Colonic mucosa (tissue), 4 donors: ENCODE measurements at regions of chr17 and their contacts with region 1.

Region 1: GRCh38 chr17:40559954-40560591 is 5.2 kb downstream of the CCR7 start:
- DNase-seq: peak; percentile 95
- H3K4me3 ChIP-seq: peak overlapping the region; percentile 20
- H3K27ac ChIP-seq: peak overlapping the region; percentile 51
- H3K4me1 ChIP-seq: peaks cover 9% of the 10 kb centered on the region
- H3K27me3 ChIP-seq: no peaks in the 10 kb centered on the region
- CTCF ChIP-seq: peak; percentile 97

Region 2: GRCh38 chr17:40399185-40399584 is 160.9 kb before region 1 on chr17:
- intact Hi-C with region 1: loop called (anchors 5 kb)
- DNase-seq: no peak
- H3K4me3 ChIP-seq: no peak overlapping the region
- H3K27ac ChIP-seq: no peak overlapping the region
- H3K4me1 ChIP-seq: no peaks in the 10 kb centered on the region
- H3K27me3 ChIP-seq: no peaks in the 10 kb centered on the region
- CTCF ChIP-seq: peak; percentile 64

Region 3: GRCh38 chr17:40510328-40510648 is 49.8 kb before region 1 on chr17:
- intact Hi-C with region 1: no loop called
- DNase-seq: no peak
- H3K4me3 ChIP-seq: no peak overlapping the region
- H3K27ac ChIP-seq: no peak overlapping the region
- H3K4me1 ChIP-seq: no peaks in the 10 kb centered on the region
- H3K27me3 ChIP-seq: no peaks in the 10 kb centered on the region
- CTCF ChIP-seq: no peak

Region 4: DNA sequence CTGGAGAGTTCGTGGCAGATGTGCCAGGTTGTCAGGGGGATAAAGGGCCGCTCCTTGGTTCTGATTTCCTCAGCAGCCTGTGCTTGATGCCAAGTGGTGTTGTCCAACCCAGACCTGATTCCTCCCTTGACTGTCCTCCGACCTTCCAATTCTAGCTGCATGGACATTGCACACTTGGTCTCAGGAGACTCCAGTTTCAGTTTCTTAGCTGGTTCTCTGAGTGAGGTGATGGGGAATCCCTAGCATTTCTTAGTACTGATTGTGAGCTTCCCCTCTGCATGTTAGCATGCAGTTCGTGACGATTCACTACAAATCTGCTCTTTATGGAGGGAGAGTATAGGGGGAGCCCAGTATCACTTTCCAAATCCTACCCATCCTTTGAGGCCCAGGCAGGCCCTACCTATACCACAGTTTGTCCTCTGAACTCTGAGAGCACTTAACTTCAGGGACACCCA is 17.6 kb after region 1 on chr17:
- intact Hi-C with region 1: no loop called
- DNase-seq: no peak
- H3K4me3 ChIP-seq: no peak overlapping the region
- H3K27ac ChIP-seq: no peak overlapping the region
- H3K4me1 ChIP-seq: no peaks in the 10 kb centered on the region
- H3K27me3 ChIP-seq: no peaks in the 10 kb centered on the region
- CTCF ChIP-seq: no peak